ENCODE measurements at regions of chrX and their contacts with region 1.

Region 1: DNA sequence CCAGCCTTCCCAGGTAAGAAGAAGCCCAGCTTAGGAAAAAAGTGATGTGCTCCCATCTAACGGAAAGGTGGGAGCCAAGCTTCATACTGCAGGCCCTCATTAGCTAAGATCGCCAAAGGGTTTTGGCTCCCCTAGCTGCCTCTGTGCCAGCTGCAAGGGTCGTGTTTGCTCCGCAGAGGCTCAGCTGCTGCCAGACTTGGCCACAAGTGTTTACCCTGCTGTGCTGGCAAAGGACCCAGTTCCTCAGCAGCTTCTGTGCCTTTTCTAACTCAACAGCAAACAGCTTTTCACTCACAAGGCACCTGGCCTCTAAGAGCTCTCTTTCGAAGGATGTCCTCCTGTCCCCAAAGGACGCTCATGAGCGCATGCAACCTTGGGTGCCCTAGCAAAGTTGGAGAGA is 12.2 kb upstream of the VMA21 start:
- DNase-seq: no peak
- ATAC-seq: no peak
- H3K4me3 ChIP-seq: no peak overlapping the region
- H3K27ac ChIP-seq: no peak overlapping the region
- H3K4me1 ChIP-seq: no peaks in the 10 kb centered on the region
- H3K27me3 ChIP-seq: no peaks in the 10 kb centered on the region
- CTCF ChIP-seq: no peak
- POLR2A ChIP-seq: no peak
- RAD21 ChIP-seq: no peak

Region 2: GRCh38 chrX:151323054-151323453 is 61.8 kb before region 1 on chrX:
- CTCF ChIA-PET with region 1: no interaction called
- POLR2A ChIA-PET with region 1: no interaction called
- RAD21 ChIA-PET with region 1: no interaction called
- intact Hi-C with region 1: loop called (anchors 10 kb)
- DNase-seq: no peak
- ATAC-seq: no peak
- H3K4me3 ChIP-seq: no peak overlapping the region
- H3K27ac ChIP-seq: no peak overlapping the region
- H3K4me1 ChIP-seq: no peaks in the 10 kb centered on the region
- H3K27me3 ChIP-seq: no peaks in the 10 kb centered on the region
- CTCF ChIP-seq: no peak
- POLR2A ChIP-seq: no peak
- RAD21 ChIP-seq: no peak

Measured in HCT116 (cell line).